Caco-2 (cell line): ENCODE measurements at regions of chr1 and their contacts with region 1.

Region 1: DNA sequence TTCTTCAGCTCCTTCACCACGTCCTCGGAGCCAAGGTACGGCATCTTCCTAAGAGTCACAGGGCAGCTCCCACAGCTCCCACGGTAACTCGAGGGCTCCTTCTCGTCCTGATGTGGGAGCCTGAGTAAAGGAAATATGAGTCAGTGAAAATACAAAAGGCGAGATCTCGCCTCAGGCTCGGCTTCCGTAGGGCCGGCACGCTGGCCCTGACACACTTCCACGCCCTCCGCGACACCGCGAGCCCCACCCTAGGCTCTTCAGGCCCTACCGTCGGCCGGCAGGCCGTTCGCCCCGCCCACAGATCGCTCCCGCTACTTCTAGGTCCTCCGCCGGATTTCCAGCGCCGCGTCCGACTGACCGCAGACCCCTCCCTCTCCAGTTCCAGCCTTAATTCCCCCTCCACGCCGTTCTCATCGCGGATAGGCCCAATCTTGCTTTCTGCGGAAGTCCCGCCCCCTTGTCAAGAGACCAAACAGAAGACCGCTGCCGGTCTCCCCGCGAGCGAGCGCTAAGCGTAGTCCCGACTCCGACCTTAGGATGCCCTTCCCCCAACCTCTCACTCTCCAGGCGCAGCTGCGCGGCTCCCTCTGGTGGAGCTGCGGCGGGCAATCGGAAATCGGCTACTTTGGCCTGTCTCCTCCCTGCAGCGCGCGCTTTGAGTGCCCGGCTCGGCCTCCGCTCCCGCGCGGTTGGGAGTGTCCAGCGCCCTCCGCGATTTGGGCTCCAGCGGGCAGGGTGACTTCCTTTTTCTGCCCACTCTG is at the starts of genes AP4B1 and DCLRE1B:
- DNase-seq: peak; percentile 97 to 98
- H3K4me3 ChIP-seq: peak within 1 kb of the TSS; percentile 65
- H3K4me3 Mint-ChIP-seq: peak within 1 kb of the TSS; percentile 99
- H3K27ac Mint-ChIP-seq: peak within 1 kb of the TSS; percentile 96
- H3K4me1 ChIP-seq: peaks cover 7% of the 10 kb centered on the region
- H3K4me1 Mint-ChIP-seq: no peaks in the 10 kb centered on the region
- H3K27me3 ChIP-seq: no peaks in the 10 kb centered on the region
- H3K27me3 Mint-ChIP-seq: no peaks in the 10 kb centered on the region
- CTCF ChIP-seq: peak in 1 of 2 experiments; percentile 66
- total RNA-seq, gene AP4B1: 9.6 and 10.0 TPM in 2 replicates
- total RNA-seq, gene DCLRE1B: 6.0 and 6.9 TPM in 2 replicates

Region 2: DNA sequence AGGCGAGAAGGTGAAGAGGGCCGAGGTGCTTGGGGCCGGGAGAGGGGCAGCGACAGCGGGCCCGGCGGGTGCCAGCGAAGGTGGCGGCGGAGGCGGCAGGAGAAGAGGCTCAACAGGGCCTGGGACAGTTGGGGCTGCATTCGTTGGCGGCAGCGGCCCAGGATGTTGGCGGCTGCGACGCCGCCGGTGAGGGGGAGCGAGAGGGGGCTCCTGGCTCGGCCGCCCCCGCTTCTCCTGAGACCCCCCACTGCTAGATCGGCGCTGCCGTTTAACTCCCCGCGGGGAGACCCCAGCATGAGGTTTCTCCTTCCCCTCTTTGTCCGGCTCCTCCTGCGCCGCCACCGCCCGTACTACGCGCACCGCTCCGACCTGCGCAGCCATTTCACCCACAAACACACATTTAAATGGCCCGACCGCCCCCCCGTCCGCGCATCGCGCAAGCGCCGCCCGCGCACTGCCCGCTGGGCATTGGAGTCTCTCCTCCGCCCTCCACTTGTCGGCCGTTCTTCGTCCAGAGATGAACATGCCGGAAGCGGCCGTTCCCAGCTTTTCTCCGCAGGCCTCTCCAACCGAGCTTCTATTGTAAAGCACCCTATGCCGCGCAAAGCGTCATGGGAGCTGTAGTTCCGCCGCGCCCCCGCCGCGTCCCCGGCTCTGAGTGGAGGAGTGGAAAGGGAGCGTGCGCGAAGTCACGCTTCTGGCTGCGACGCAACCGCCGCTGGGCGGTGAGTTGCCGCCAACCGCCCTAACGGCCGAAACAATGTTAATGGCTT is 92.8 kb before region 1 on chr1 and contains the start of gene RSBN1:
- CTCF ChIA-PET with region 1: no interaction called
- POLR2A ChIA-PET with region 1: interaction called, 5 read pairs
- intact Hi-C with region 1: loop called (anchors 1 kb)
- DNase-seq: peak; percentile 95 to 98
- H3K4me3 ChIP-seq: peak within 1 kb of the TSS; percentile 82
- H3K4me3 Mint-ChIP-seq: peak within 1 kb of the TSS; percentile 77
- H3K27ac Mint-ChIP-seq: peak within 1 kb of the TSS; percentile 70
- H3K4me1 ChIP-seq: peaks cover 8% of the 10 kb centered on the region
- H3K4me1 Mint-ChIP-seq: no peaks in the 10 kb centered on the region
- H3K27me3 ChIP-seq: no peaks in the 10 kb centered on the region
- H3K27me3 Mint-ChIP-seq: no peaks in the 10 kb centered on the region
- CTCF ChIP-seq: no peak
- total RNA-seq, gene RSBN1: 7.3 and 11.5 TPM in 2 replicates

Region 3: DNA sequence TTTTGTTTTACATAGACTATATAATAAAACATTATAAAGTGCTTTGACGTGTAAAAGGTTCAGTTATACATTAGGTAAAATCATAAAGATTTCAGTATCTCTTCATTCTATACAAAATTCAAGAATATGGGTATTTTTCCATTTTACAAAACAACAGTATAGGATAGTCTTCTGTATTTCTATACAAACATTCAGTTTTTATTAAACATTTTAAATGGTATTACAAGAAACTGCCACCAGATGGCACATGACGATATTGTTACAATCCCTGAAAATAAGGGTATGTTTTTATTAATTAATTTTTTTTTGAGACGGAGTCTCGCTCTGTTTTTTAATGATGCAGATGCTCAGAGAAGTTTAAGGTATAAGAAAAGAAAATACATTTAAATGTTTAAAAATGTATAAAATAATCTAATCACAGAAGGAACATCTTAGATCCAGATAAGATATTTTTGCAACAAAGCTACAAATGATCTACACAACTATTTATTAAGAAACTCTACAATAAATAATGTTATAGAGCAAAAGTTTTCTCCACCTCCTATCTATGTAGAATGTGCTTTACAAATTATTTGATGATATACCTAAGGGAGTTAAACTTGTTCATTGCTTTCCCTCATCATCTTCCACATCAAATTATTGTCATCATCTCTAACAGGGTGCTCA is 69.1 kb before region 1 on chr1:
- CTCF ChIA-PET with region 1: no interaction called
- POLR2A ChIA-PET with region 1: interaction called, 3 read pairs
- intact Hi-C with region 1: loop called (anchors 1 kb)
- DNase-seq: peak in 1 of 2 experiments; percentile 37
- H3K4me3 ChIP-seq: no peak overlapping the region
- H3K4me3 Mint-ChIP-seq: no peak overlapping the region
- H3K27ac Mint-ChIP-seq: no peak overlapping the region
- H3K4me1 ChIP-seq: no peaks in the 10 kb centered on the region
- H3K4me1 Mint-ChIP-seq: no peaks in the 10 kb centered on the region
- H3K27me3 ChIP-seq: no peaks in the 10 kb centered on the region
- H3K27me3 Mint-ChIP-seq: peaks cover 8% of the 10 kb centered on the region
- CTCF ChIP-seq: peak in 1 of 2 experiments; percentile 37

Region 4: GRCh38 chr1:113928941-113929749 is 24.3 kb after region 1 on chr1 and contains the start of gene HIPK1:
- CTCF ChIA-PET with region 1: interaction called, 12 read pairs
- POLR2A ChIA-PET with region 1: interaction called, 10 read pairs
- intact Hi-C with region 1: loop called (anchors 1 kb)
- DNase-seq: peak; percentile 88 to 91
- H3K4me3 ChIP-seq: peak within 1 kb of the TSS; percentile 82
- H3K4me3 Mint-ChIP-seq: peak within 1 kb of the TSS; percentile 87
- H3K27ac Mint-ChIP-seq: peak within 1 kb of the TSS; percentile 92
- H3K4me1 ChIP-seq: peaks cover 7% of the 10 kb centered on the region; the same call in 1 of the 2 replicates
- H3K4me1 Mint-ChIP-seq: peaks cover 19% of the 10 kb centered on the region
- H3K27me3 ChIP-seq: no peaks in the 10 kb centered on the region
- H3K27me3 Mint-ChIP-seq: no peaks in the 10 kb centered on the region
- CTCF ChIP-seq: no peak
- total RNA-seq, gene HIPK1: 42.6 and 48.2 TPM in 2 replicates